Mammary epithelial cell (primary cell): ENCODE measurements at regions of chr19 and their contacts with region 1.

Region 1: DNA sequence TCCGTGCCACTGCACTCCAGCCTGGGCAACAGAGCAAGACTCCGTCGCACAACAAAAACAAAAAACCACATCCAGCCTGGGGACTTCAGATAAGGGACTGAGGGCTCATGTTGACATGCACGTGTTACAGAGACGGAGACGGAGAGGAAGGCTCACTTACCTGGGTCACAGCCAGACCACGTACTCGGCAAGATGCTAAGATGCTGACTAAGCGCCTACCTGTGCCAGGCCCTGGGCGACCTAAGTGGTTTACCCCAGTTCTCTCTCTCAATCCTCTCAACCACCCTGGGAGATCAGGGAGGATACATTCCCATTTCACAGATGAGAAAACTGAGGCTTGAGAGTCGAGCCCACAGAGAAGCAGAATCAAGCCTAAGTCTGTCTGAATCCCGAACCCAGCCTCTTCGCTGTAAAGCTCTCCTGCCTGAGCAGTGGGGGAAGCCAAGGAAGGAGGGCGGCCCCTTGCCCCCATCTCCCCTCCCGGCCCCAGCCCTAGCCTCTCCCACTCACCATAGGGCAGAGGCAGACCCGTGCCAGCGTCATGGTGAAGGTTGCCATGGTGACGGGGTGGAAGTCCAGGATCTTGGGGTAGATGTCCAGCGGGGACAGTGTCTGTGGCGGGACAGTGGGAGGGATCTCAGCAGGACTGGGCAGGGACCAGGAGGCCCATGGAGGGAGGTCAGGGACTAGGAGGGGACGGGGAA is 13.5 kb downstream of the ERCC2 start:
- DNase-seq: no peak
- H3K4me3 ChIP-seq: no peak overlapping the region
- H3K27ac ChIP-seq: no peak overlapping the region
- H3K4me1 ChIP-seq: no peaks in the 10 kb centered on the region
- H3K27me3 ChIP-seq: no peaks in the 10 kb centered on the region
- CTCF ChIP-seq: no peak

Region 2: DNA sequence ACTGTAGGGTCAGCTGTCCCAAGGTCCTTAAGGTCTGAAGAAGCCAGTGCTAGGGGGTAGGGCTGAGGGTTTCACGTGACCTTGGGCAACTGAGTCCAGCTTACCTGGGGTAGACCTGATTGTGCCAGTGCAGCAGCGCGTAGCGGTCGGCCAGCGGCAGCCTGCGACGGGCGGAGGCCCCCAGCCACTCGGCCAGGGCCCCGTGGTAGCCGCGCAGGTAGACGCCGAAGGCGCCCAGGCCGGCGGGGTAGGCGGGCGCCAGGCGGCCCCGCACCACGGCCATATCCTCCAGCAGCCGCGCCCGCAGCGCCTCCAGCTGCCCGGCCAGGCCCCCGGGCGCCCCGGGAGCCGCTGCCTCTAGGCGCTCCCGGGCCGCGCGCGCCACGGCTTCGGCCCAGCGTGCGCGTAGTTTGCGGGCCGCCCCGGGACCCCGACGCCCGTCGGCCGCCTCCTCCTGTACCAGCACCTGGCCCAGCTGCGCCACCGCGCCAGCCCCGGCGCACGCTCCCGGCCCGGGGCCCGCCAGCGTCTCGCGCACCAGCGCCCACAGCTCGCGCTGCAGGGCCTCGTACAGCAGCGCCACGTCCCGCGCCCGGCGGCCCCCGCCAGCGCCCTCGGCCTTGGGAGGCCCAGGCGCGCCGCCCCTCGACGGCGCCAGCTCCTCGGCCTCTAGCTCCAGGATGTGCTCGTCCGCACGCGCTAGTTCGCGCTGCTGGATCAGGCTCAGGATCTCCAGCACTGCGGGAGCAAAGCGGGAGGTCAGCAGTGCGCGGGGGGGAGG is 122.6 kb before region 1 on chr19:
- CTCF ChIA-PET with region 1: no interaction called
- dilution Hi-C with region 1: loop called (anchors 5 kb)
- in situ Hi-C with region 1: no loop called
- intact Hi-C with region 1: no loop called
- DNase-seq: no peak
- H3K4me3 ChIP-seq: no peak overlapping the region
- H3K27ac ChIP-seq: no peak overlapping the region
- H3K4me1 ChIP-seq: peaks cover 18% of the 10 kb centered on the region
- H3K27me3 ChIP-seq: no peaks in the 10 kb centered on the region
- CTCF ChIP-seq: no peak

Region 3: DNA sequence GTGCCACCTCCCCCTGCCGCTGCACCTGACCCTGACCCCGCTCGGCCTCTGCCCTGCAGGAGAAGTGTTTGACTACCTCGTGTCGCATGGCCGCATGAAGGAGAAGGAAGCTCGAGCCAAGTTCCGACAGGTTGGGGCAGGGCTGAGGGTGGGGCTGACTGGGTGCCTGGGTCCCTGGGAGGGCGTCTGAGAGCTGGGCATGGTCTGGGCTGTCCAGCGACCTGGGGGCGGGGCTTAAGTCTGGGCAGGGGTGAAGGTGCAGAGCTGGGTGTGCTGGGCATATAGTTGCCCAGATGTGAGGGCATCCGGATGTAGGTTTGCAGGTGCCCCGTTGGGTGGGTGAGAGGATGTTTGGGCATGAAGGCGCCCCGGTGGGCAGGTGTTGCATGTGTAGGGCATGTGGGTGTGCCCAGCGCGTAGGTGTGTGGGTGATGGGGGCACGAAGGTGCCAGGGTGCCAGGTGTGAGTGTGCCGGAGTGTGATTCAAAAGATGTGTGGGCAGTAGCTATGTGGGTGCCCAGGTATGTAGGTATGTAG is 92.1 kb before region 1 on chr19:
- CTCF ChIA-PET with region 1: no interaction called
- dilution Hi-C with region 1: loop called (anchors 5 kb)
- in situ Hi-C with region 1: no loop called
- intact Hi-C with region 1: no loop called
- DNase-seq: no peak
- H3K4me3 ChIP-seq: no peak overlapping the region
- H3K27ac ChIP-seq: no peak overlapping the region
- H3K4me1 ChIP-seq: no peaks in the 10 kb centered on the region
- H3K27me3 ChIP-seq: no peaks in the 10 kb centered on the region
- CTCF ChIP-seq: no peak

Region 4: GRCh38 chr19:45294291-45295029 is 62.5 kb before region 1 on chr19:
- CTCF ChIA-PET with region 1: no interaction called
- dilution Hi-C with region 1: loop called (anchors 5 kb)
- in situ Hi-C with region 1: no loop called
- intact Hi-C with region 1: no loop called
- DNase-seq: no peak
- H3K4me3 ChIP-seq: no peak overlapping the region
- H3K27ac ChIP-seq: no peak overlapping the region
- H3K4me1 ChIP-seq: peaks cover 12% of the 10 kb centered on the region
- H3K27me3 ChIP-seq: no peaks in the 10 kb centered on the region
- CTCF ChIP-seq: no peak

Region 5: DNA sequence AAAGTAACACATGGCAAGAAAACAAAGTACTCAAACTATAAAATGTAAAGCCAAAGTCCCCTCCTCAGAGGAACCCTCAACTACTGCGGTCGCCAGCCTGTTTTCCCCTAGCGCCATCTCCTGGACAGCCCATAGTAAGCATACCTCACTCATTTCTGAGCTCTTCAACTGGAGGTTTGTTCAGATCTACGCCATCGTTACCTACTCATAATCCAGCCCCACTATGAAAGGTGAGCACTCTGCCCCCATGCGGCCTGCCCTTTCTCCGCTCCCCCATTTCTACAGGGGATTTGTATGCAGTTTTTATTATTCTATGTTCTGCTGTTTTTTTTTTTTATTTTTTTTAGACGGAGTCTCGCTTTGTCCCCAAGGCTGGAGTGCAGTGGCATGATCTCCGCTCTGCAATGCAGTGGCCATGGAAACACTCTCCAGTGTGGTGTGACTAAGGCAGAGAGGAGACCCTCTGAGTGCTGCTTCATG is 201.5 kb after region 1 on chr19:
- CTCF ChIA-PET with region 1: no interaction called
- dilution Hi-C with region 1: loop called (anchors 5 kb)
- in situ Hi-C with region 1: no loop called
- intact Hi-C with region 1: no loop called
- DNase-seq: peak; percentile 40
- H3K4me3 ChIP-seq: no peak overlapping the region
- H3K27ac ChIP-seq: no peak overlapping the region
- H3K4me1 ChIP-seq: peaks cover 20% of the 10 kb centered on the region
- H3K27me3 ChIP-seq: no peaks in the 10 kb centered on the region
- CTCF ChIP-seq: peak; percentile 88 to 90

Region 6: GRCh38 chr19:45701676-45702075 is 344.8 kb after region 1 on chr19:
- CTCF ChIA-PET with region 1: no interaction called
- dilution Hi-C with region 1: no loop called
- in situ Hi-C with region 1: no loop called
- intact Hi-C with region 1: no loop called
- DNase-seq: no peak
- H3K4me3 ChIP-seq: no peak overlapping the region
- H3K27ac ChIP-seq: no peak overlapping the region
- H3K4me1 ChIP-seq: no peaks in the 10 kb centered on the region
- H3K27me3 ChIP-seq: no peaks in the 10 kb centered on the region
- CTCF ChIP-seq: no peak